PC-3 (cell line): ENCODE measurements at regions of chr1 and their contacts with region 1.

Region 1: DNA sequence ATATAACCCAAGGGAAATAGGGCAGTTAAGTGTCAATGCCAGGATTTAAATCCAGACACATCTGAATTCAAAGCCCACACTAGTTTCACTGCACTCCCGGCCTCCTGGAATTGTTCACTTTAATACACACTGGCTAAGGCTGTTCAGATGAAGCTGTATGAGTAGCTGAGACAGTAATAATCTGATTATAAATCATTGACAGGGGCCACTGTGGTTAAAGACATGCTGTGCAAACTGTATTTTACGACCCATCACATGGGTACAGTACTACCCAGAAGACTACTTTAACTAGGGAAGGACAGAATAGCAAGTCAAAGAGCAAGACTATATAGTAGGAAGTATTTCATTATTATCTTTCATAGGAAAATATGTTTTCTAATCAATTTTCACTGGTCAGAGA is 16.1 kb upstream of the NTNG1 start:
- DNase-seq: no peak
- ATAC-seq: no peak
- H3K4me3 ChIP-seq: no peak overlapping the region
- H3K27ac ChIP-seq: no peak overlapping the region
- H3K4me1 ChIP-seq: no peaks in the 10 kb centered on the region
- H3K27me3 ChIP-seq: no peaks in the 10 kb centered on the region
- CTCF ChIP-seq: no peak

Region 2: GRCh38 chr1:106022312-106022902 is 1102.3 kb before region 1 on chr1:
- CTCF ChIA-PET with region 1: no interaction called
- POLR2A ChIA-PET with region 1: no interaction called
- intact Hi-C with region 1: loop called (anchors 10 kb)
- DNase-seq: peak; percentile 51
- ATAC-seq: no peak
- H3K4me3 ChIP-seq: no peak overlapping the region
- H3K27ac ChIP-seq: no peak overlapping the region
- H3K4me1 ChIP-seq: no peaks in the 10 kb centered on the region
- H3K27me3 ChIP-seq: no peaks in the 10 kb centered on the region
- CTCF ChIP-seq: peak; percentile 68

Region 3: GRCh38 chr1:107318932-107319331 is 194.2 kb after region 1 on chr1:
- CTCF ChIA-PET with region 1: no interaction called
- POLR2A ChIA-PET with region 1: no interaction called
- intact Hi-C with region 1: no loop called
- DNase-seq: no peak
- ATAC-seq: no peak
- H3K4me3 ChIP-seq: no peak overlapping the region
- H3K27ac ChIP-seq: no peak overlapping the region
- H3K4me1 ChIP-seq: peaks cover 16% of the 10 kb centered on the region
- H3K27me3 ChIP-seq: no peaks in the 10 kb centered on the region
- CTCF ChIP-seq: no peak